ENCODE measurements at regions of chr15 and their contacts with region 1.

Region 1: DNA sequence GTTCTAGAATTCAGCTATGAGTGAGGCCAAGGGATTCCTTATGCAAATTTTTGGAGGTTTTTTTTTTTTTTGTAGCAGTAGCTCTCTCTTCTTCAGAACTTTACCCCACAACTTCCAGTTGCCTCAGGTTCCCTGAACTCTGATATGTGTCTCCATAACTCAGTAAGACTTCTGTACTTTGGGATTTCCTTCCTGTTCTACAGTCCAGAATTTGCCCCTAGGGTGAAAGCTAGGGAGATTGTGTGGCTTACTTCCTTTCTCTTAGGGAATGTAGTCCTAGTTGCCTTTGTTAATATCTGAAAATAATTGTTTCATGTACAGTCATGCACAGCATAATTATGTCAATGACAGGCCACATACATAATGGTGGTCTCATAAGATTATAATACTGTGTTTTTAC is 30.8 kb downstream of the LRRC28 start:
- DNase-seq: no peak
- ATAC-seq: no peak

Region 2: GRCh38 chr15:98799461-98800390 is 482.4 kb before region 1 on chr15:
- intact Hi-C with region 1: no loop called
- DNase-seq: no peak
- ATAC-seq: peak in 1 of 2 donors; percentile 51

Region 3: GRCh38 chr15:99704444-99704838 is 422.3 kb after region 1 on chr15:
- intact Hi-C with region 1: loop called in 1 of 2 experiments (anchors 2 kb)
- DNase-seq: no peak
- ATAC-seq: peak; percentile 74 to 76

Region 4: GRCh38 chr15:99719096-99719541 is 437.0 kb after region 1 on chr15:
- intact Hi-C with region 1: loop called (anchors 5 to 10 kb)
- DNase-seq: no peak
- ATAC-seq: no peak

Region 5: DNA sequence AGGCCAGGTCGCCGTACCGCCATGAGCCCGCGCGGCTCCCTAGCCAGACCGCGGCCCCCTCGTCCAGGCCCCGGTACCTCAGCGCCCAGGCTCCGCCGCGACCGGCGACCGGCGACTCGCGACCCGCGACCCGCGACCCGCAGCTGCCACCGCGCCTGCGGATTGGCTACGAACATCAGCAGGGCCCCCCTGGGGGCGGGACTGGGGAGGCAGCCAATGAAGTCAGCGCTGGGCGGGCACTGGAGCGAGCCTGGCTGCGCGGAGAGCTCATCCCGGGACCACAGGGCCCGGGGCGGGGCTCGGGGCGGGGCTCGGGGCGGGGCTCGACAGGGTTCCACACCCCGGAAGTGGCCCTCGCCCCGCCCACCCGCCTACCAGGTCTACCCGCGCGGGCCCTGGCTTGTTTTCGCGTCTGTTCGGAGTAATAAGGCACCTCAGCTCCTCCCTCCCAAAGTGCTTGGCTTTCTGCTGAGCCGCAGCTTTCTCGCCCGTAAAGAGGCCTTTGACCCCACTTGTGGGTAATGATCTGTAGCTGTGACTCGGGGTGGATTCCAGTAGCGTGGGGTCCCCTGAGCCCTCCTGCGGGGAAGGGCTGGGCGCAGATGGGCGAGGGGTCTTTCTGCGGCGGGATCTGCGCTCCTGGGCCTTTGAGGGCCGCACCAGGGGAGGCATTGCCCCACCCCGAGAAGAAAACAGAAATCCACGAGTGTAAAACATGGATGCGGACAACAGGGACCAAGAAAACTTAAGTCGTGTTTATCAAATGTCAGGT is 451.3 kb after region 1 on chr15 and contains the start of gene LYSMD4:
- intact Hi-C with region 1: loop called in 1 of 2 experiments (anchors 10 kb)
- DNase-seq: peak; percentile 99
- ATAC-seq: peak; percentile 98 to 99
- total RNA-seq, gene LYSMD4: 7.8 to 11.5 TPM

Region 6: DNA sequence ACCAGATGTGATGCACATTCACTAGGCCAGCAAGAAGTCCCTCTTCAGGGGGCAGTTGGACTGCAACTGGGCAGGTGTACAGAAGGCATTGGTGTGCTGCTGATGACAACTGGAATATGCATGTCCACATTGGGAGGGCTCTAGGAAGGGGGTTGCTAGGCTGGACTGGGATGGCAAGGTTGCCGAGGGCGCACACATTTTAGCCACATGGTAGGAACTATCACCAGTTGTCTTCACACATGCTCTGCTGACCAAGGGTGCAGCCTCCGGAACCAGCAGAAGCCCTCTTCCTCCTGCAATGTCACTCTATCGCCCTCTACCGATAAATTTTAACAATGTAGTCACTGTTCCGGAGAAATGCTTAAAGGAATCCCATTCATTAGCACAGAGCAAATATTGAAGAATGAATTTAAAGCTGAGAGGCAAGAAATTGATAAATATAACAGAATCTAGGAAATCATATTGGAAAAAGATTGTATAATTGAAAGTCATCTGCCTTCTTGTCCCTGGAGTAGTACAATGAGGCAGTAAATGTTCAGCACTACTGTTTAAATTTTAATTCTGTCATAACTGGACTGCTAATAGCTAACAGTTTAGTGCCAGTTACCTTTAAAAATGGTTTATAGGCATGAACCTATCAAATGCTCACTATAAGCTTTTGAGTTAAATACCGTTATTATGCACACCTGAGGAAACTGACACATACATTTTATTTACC is 473.7 kb after region 1 on chr15:
- intact Hi-C with region 1: loop called (anchors 5 to 10 kb)
- DNase-seq: peak; percentile 38
- ATAC-seq: peak; percentile 85 to 89

Measured in left cardiac atrium (tissue), 4 donors.